ENCODE measurements at regions of chr1 and their contacts with region 1.

Region 1: DNA sequence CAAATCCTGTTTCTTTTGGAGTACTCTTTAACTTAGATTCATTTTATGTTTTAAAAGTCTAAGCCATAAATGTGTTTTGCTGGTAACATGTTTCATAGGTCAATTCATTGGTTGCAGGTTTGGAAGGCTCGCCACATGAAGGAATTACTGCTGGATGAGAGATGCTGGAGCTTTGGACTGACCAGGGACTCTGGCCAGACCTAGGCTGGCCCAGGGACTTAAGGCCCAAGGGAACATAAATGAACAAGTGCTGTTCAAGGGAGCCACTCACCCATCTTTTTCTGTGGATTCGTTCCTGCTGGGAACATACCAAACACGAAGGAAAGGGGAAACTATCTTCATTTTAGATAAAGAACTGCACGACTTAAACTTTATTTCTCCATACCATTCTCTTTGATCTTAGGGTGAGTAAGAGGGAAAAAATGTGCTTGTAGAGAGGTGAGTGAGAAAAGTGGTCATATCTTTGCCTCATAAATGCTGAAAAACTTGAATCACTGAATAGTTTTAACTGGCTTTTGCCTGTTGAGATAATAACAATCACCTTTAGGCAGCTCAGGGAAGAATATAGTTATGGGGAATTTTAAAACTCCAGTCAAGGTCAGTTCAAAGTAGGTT is 15.3 kb upstream of the SHCBP1L start:
- DNase-seq: no peak
- ATAC-seq: no peak
- H3K4me3 ChIP-seq: no peak overlapping the region
- H3K27ac ChIP-seq: no peak overlapping the region
- H3K4me1 ChIP-seq: peaks cover 12% of the 10 kb centered on the region
- H3K27me3 ChIP-seq: no peaks in the 10 kb centered on the region
- CTCF ChIP-seq: no peak
- POLR2A ChIP-seq: no peak

Region 2: DNA sequence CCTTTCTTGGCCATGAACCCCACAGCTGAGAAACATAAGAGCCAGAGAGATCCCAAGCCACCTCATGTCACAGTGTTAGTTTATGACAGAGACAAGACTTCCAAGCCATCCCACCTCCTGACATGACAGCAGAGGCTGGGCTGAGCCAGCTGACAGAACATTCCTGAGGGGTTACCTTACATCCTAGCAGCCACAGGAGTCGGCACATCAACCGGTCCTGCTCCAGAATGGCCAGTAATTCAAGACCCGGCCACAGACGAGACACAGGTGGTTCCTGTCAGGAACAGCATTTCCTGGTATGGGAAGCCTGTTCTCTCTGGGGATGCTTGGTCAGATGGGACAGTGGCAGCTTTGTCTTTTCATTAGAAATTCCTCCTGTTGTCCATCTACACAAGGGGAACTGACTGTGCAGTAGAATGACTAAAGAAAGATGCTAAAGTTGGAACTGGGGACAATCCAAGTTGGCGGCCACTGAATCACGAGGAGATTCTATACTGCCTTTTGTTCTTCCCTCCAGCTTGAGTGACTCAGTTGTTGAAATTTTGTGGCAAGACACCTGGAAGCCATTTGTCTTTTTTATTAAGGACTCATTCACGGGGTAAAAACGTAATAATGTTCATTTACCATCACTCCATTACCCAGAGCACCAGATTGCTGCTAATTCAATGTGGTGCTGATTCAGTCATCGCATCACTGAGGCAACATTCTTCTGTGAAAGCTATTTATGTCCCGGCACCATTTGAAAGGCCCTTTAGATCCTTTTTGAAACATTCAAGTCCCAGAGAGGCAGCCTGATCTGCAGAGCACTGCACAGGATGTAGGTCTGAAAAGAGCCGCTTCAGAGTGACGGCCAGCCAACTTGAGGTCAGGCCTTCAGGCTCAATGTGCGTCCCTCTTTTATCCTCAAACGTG is 215.9 kb before region 1 on chr1:
- intact Hi-C with region 1: no loop called
- DNase-seq: no peak
- ATAC-seq: no peak
- H3K4me3 ChIP-seq: no peak overlapping the region
- H3K27ac ChIP-seq: no peak overlapping the region
- H3K4me1 ChIP-seq: no peaks in the 10 kb centered on the region
- H3K27me3 ChIP-seq: no peaks in the 10 kb centered on the region
- CTCF ChIP-seq: no peak
- POLR2A ChIP-seq: no peak

Region 3: GRCh38 chr1:183023601-183024316 is 55.5 kb after region 1 on chr1:
- intact Hi-C with region 1: loop called (anchors 5 kb)
- DNase-seq: peak; percentile 81 to 91 (median 86)
- ATAC-seq: peak; percentile 73
- H3K4me3 ChIP-seq: peak overlapping the region; percentile 82 to 86
- H3K27ac ChIP-seq: peak overlapping the region; percentile 97 to 99 (median 98)
- H3K4me1 ChIP-seq: peaks cover 41% of the 10 kb centered on the region
- H3K27me3 ChIP-seq: no peaks in the 10 kb centered on the region
- CTCF ChIP-seq: peak; percentile 43 to 86 (median 74)
- POLR2A ChIP-seq: peak; percentile 55 to 75 (median 64)

Region 4: DNA sequence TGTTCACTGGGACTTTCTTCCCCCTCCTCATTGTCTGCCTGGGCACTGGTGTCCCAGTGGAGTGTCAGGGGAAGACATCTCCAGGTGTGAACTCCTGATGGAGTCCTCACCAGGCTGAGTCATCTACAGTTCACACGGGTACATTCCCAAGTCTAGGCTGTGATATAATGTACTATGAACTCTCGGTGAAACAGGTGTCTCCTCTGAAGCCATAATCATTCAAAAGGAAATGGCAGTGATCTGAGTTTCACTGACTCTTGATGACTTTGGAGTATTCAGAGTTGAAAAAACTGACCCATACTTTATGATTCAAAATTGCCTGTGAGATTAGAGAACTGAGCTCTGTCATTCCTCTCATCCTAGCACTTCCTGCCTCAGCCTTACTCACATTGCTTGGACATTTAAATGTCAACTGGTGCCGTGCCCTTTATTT is 226.9 kb after region 1 on chr1:
- intact Hi-C with region 1: no loop called
- DNase-seq: no peak
- ATAC-seq: no peak
- H3K4me3 ChIP-seq: no peak overlapping the region
- H3K27ac ChIP-seq: no peak overlapping the region
- H3K4me1 ChIP-seq: no peaks in the 10 kb centered on the region
- H3K27me3 ChIP-seq: peaks cover 0 to 5% of the 10 kb centered on the region in 2 donors
- CTCF ChIP-seq: no peak
- POLR2A ChIP-seq: no peak

Region 5: DNA sequence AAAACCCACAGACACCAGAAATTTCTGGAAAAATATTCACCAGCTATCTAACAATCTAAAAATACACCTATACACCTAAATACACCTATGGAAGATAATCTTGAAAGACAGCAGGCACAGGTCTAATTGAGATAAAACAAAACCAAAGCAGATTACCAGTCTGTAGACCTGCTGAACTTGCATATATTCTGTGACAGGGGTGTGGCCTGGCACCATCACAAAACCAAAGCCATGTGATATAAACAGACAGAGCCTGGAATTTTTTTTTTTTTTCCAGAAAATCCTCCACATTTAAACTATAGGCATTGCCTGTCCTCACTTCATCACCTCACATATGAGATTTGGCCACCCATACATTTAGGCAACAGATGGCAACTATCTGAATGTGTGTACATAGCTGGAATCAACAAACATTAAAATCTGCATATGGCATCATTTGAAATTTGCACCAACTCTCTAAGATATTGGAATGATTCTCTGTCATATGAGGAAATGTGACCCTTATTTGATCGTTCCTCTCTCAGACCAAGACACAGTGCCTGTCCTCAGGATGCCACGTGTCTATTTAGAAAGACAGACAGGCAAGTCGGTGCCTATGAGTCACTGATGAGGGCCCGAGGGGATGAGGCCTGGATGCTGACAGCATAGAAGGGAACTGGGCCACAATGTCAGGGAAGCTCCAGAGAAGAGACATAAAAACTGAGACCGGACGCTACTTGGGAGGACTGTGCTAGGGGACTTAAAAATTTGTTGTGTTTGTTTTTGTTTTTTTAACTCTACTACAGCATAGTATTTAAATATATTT is 417.3 kb after region 1 on chr1:
- intact Hi-C with region 1: no loop called
- DNase-seq: no peak
- ATAC-seq: no peak
- H3K4me3 ChIP-seq: no peak overlapping the region
- H3K27ac ChIP-seq: no peak overlapping the region
- H3K4me1 ChIP-seq: no peaks in the 10 kb centered on the region
- H3K27me3 ChIP-seq: no peaks in the 10 kb centered on the region
- CTCF ChIP-seq: no peak
- POLR2A ChIP-seq: no peak

Measured in body of pancreas (tissue), 4 donors.